GM18951 (cell line): ENCODE measurements at regions of chr15 and their contacts with region 1.

Region 1: GRCh38 chr15:69729161-69729748 is 276.6 kb downstream of the RPLP1 start:
- POLR2A ChIP-seq: no peak

Region 2: DNA sequence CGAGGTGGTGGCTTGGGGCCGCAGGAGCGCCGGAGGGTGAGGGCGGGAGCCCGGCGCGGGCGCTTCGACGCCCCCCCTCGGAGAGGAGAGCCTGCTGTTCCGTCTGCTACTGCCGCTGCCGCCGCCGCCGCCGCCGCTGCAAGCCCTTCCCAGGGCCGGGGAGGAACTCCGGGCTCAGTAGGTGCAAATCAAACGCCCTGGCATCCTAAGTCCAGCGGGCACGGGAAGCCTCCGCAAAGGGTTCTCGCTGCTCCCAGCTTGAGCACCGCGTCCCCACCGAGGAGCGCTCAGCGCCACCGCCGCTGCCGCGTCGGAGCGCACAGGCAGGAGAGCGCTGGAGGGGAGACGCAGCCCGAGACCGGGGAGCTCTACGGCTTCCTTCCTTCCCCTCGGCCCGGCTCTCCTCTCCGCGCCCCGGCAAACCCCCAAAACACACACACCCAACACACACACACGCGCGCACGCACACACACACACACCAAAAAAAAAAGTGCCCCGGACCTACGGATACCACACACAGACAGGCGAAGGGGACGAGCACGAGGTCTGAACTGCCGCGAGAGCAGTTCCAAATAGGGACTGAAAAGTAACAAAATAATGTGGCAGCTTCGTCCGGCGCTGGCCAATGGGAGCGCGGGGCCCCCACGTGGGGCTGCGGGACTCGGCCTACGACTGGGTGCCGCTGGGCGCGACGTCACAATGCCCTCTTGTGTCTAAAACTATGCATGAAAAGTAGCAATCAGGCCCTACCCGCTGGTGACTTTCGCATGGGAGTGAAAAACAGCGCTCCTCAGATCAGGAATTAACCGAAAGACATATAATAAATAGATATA is 368.3 kb after region 1 on chr15 and contains the start of gene TLE3:
- in situ Hi-C with region 1: loop called (anchors 25 kb)
- POLR2A ChIP-seq: peak; percentile 93